Natural killer cell (primary cell): ENCODE measurements at regions of chr6 and their contacts with region 1.

Region 1: GRCh38 chr6:63764318-63764916 is 128.8 kb downstream of the PHF3 start:
- DNase-seq: peak in 1 of 2 donors; percentile 77
- ATAC-seq: peak in 1 of 3 donors; percentile 55
- H3K4me3 ChIP-seq: no peak overlapping the region
- H3K4me3 Mint-ChIP-seq: no peak overlapping the region
- H3K27ac ChIP-seq: no peak overlapping the region
- H3K27ac Mint-ChIP-seq: no peak overlapping the region
- H3K4me1 ChIP-seq: no peaks in the 10 kb centered on the region
- H3K4me1 Mint-ChIP-seq: no peaks in the 10 kb centered on the region
- H3K27me3 ChIP-seq: peaks cover 2% of the 10 kb centered on the region
- H3K27me3 Mint-ChIP-seq: peaks cover 0 to 7% of the 10 kb centered on the region in 2 donors
- CTCF ChIP-seq: peak; percentile 74

Region 2: GRCh38 chr6:63352587-63353285 is 411.7 kb before region 1 on chr6:
- intact Hi-C with region 1: loop called (anchors 2 kb)
- DNase-seq: peak in 1 of 2 donors; percentile 9
- ATAC-seq: peak; percentile 68 to 85 (median 70)
- H3K4me3 ChIP-seq: no peak overlapping the region
- H3K4me3 Mint-ChIP-seq: peak overlapping the region; percentile 55
- H3K27ac ChIP-seq: no peak overlapping the region
- H3K27ac Mint-ChIP-seq: peak overlapping the region; percentile 77 to 81
- H3K4me1 ChIP-seq: peaks cover 5% of the 10 kb centered on the region
- H3K4me1 Mint-ChIP-seq: peaks cover 15 to 20% of the 10 kb centered on the region in 2 donors
- H3K27me3 ChIP-seq: no peaks in the 10 kb centered on the region
- H3K27me3 Mint-ChIP-seq: no peaks in the 10 kb centered on the region
- CTCF ChIP-seq: no peak

Region 3: GRCh38 chr6:63816982-63817436 is 52.6 kb after region 1 on chr6:
- intact Hi-C with region 1: no loop called
- DNase-seq: no peak
- ATAC-seq: no peak
- H3K4me3 ChIP-seq: no peak overlapping the region
- H3K4me3 Mint-ChIP-seq: no peak overlapping the region
- H3K27ac ChIP-seq: no peak overlapping the region
- H3K27ac Mint-ChIP-seq: no peak overlapping the region
- H3K4me1 ChIP-seq: no peaks in the 10 kb centered on the region
- H3K4me1 Mint-ChIP-seq: no peaks in the 10 kb centered on the region
- H3K27me3 ChIP-seq: no peaks in the 10 kb centered on the region
- H3K27me3 Mint-ChIP-seq: no peaks in the 10 kb centered on the region
- CTCF ChIP-seq: no peak

Region 4: DNA sequence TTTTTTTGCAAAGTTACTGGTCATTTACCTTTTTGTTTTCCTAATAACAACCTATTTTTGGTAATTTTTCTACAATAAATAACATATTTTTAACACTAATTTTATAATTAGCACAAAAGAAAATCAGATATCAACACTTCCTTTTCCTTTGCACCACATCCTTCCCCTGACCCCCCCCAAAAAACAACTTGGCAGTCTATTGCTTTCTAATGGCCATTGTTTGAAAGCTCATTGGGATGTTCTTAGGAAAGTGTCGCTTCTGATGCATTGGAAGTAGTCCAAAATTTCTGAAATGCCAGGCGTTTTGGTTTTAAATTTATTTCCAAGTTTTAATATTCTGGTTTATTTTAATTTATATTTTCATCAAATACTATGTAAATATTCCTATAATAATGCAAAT is 1534.8 kb after region 1 on chr6:
- intact Hi-C with region 1: no loop called
- DNase-seq: no peak
- ATAC-seq: no peak
- H3K4me3 ChIP-seq: no peak overlapping the region
- H3K4me3 Mint-ChIP-seq: no peak overlapping the region
- H3K27ac ChIP-seq: no peak overlapping the region
- H3K27ac Mint-ChIP-seq: no peak overlapping the region
- H3K4me1 ChIP-seq: no peaks in the 10 kb centered on the region
- H3K4me1 Mint-ChIP-seq: no peaks in the 10 kb centered on the region
- H3K27me3 ChIP-seq: no peaks in the 10 kb centered on the region
- H3K27me3 Mint-ChIP-seq: no peaks in the 10 kb centered on the region
- CTCF ChIP-seq: no peak